Activated CD4-positive, alpha-beta T cell treated with anti-CD3 and anti-CD28 coated beads, Interleukin-2, amount 10 ng/mL, durations not matched to agents 24 days and 14 days (primary cell): ENCODE measurements at regions of chr1 and their contacts with region 1.

Region 1: GRCh38 chr1:231603598-231604275 is 22.9 kb upstream of the DISC1 start:
- DNase-seq: peak; percentile 84
- H3K4me3 Mint-ChIP-seq: peak overlapping the region; percentile 89
- H3K27ac Mint-ChIP-seq: peak overlapping the region; percentile 65
- H3K4me1 Mint-ChIP-seq: peaks cover 12% of the 10 kb centered on the region
- H3K27me3 Mint-ChIP-seq: peaks cover 10% of the 10 kb centered on the region

Region 2: GRCh38 chr1:231301990-231302389 is 301.7 kb before region 1 on chr1:
- intact Hi-C with region 1: no loop called
- DNase-seq: no peak
- H3K4me3 Mint-ChIP-seq: no peak overlapping the region
- H3K27ac Mint-ChIP-seq: no peak overlapping the region
- H3K4me1 Mint-ChIP-seq: no peaks in the 10 kb centered on the region
- H3K27me3 Mint-ChIP-seq: no peaks in the 10 kb centered on the region

Region 3: DNA sequence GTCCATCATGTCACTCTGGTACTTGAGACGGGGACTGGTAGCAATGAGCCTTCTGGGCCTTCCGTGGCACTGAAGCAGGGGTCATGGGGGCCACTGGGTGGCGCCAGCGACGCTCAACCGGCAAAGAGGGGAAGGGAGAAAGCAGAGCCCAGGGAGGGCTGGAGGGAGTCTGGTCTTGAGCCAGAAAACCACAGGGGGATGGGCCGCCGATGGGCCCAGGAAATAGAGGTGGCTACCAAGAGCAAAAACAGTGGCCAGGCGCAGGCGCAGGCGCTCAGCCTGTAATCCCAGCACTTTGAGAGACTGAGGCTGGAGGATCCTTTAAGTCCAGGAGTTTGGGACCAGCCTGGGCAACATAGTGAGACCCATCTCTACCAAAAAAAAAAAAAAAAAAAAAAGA is 287.9 kb before region 1 on chr1:
- intact Hi-C with region 1: loop called (anchors 5 kb)
- DNase-seq: peak; percentile 84
- H3K4me3 Mint-ChIP-seq: no peak overlapping the region
- H3K27ac Mint-ChIP-seq: no peak overlapping the region
- H3K4me1 Mint-ChIP-seq: peaks cover 3% of the 10 kb centered on the region
- H3K27me3 Mint-ChIP-seq: peaks cover 4% of the 10 kb centered on the region

Region 4: DNA sequence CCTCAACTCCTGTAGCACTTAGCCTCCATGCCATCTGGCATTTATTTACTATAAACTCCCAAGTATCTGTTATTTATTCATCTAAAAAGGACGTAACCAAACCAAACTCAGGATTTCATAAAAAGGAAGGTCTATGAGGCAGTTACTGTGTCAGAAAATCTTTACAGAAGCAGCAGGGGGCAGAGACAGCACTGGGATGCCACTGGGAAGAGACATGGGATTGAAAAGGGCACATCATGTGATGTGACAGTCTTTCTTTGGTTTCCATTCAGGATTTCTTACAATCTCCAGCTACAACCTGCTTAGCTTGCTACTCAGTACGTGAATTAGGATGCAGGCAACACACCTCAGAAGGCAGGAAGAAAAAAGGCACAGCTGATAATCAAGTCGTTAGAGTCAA is 234.5 kb before region 1 on chr1:
- intact Hi-C with region 1: no loop called
- DNase-seq: no peak
- H3K4me3 Mint-ChIP-seq: no peak overlapping the region
- H3K27ac Mint-ChIP-seq: no peak overlapping the region
- H3K4me1 Mint-ChIP-seq: peaks cover 2% of the 10 kb centered on the region
- H3K27me3 Mint-ChIP-seq: no peaks in the 10 kb centered on the region

Region 5: GRCh38 chr1:231626535-231626945 is 22.8 kb after region 1 on chr1 and contains the start of gene DISC1:
- intact Hi-C with region 1: no loop called
- DNase-seq: peak; percentile 93
- H3K4me3 Mint-ChIP-seq: peak within 1 kb of the TSS; percentile 86
- H3K27ac Mint-ChIP-seq: peak within 1 kb of the TSS; percentile 82
- H3K4me1 Mint-ChIP-seq: peaks cover 30% of the 10 kb centered on the region
- H3K27me3 Mint-ChIP-seq: peaks cover 30% of the 10 kb centered on the region
- total RNA-seq, gene DISC1: 1.6 and 3.1 TPM in 2 replicates